ENCODE measurements at regions of chr4 and their contacts with region 1.

Region 1: GRCh38 chr4:110193822-110194761 is 4.3 kb downstream of the ELOVL6 start:
- DNase-seq: peak; percentile 82 to 98 (median 92)

Region 2: DNA sequence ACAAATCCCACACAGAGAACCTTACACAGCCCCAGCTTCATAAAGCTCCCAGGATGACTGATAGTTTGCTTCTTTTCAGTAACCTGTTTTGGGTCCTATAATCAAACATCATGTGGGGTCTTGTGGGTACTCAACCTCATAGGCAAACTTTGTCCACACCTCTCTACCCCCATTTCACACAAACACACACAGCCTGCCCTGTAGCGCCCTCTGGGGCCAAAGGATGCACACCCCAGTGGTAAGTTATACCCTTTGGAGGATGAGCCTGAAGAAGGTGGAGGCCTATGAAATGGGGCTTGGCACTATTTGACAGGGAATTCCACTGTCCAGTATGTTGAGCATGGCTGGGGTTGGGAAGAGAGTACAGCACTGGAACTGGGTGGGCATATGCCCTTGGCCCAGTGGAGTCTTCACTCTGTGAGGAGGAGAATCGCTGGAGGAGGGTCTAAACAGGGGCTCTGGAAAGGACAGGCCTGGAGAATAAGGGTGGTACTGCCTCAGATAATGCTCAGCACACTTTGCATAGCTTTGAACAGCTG is 861.1 kb before region 1 on chr4:
- intact Hi-C with region 1: no loop called
- DNase-seq: no peak

Region 3: DNA sequence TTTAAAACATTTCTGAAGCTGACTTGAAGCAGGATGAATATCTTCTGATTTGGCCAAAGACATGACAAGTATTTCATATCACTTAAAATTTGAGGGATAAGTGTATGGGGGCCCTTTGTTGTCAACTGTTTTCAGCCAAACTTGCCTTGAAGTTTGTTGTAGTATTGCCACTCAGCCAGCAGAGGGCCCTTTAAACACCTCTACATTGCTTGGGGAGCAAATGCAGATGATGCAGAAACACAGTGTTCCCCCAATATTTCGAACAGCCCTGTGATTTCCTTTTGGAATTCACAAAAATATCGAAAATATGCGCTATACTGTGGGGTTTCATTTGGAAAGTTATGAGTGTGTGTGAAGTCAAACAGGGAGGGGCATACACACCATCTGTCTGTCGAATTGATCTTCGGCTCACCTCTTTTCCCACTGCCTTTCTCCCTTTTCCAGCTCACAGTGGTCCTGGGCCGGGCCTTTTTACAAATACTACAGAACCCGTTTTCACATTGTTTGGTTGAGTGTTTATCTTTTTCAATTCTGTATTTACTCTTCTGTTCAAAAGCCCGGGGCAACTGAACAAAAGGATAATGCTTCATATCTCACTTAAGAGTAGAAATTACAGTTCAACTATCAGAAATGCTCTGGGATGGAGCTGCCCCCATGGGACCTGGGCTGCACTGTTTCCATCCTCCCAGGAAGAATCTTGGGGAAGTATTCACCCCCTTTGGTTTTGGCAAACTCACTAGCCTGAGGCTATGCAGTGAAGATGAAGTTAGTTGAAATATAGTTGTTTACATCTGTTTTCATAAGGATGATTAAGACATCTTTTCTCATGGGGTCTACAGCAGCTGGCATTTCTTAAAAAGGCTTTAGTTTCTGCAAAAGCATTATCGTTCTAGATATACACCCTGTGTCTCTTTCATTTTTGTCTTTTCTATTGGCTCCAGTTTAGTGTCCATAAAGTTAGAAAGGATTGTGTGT is 143.9 kb before region 1 on chr4:
- intact Hi-C with region 1: loop called (anchors 5 kb)
- DNase-seq: peak in 6 of 10 donors; percentile 25 to 87 (median 63)

Region 4: DNA sequence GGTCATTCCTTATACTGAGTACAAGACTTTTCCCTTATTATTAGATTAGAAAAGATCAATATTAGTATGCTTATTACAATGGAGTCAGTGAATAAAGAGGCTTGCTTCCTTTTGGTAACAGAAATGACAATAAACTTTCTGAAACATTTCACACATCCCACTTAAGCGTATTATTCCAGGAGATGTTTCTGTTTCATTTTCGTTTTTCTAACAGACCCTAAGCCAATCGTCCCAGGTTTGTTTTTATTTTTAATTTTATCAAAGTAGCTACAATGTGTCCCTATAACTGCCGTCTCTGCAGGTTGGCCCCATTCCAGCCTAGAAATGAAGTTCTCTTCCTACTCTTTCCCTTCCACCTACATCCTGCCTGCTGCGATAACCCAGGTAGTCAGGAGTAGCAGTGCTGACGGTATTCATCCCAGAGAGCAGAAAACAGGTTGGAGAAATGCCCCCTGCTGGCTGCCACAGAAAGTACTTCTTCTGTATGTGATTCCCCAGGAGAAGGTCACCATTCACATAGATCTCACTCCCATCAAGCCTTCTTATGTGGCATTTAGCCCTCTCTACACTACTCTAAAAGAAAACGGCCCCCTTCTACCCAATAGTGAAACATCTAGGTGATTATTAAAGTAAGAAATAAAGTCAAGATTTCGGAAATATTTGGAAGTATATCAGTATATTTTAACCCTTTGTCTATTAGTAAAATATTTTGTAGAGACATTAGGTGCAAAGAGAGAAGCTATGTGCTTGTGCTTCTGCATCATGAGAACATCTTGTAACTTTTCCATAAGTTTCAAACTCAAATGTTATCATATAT is 322.2 kb after region 1 on chr4:
- intact Hi-C with region 1: loop called (anchors 10 kb)
- DNase-seq: peak; percentile 37 to 93 (median 69)

Region 5: GRCh38 chr4:110945600-110945999 is 751.5 kb after region 1 on chr4:
- intact Hi-C with region 1: no loop called
- DNase-seq: peak in 2 of 10 donors; percentile 61 to 69

Measured in posterior cingulate gyrus (tissue), 11 donors.